Uterus (tissue), 4 donors: ENCODE measurements at regions of chr12 and their contacts with region 1.

Region 1: DNA sequence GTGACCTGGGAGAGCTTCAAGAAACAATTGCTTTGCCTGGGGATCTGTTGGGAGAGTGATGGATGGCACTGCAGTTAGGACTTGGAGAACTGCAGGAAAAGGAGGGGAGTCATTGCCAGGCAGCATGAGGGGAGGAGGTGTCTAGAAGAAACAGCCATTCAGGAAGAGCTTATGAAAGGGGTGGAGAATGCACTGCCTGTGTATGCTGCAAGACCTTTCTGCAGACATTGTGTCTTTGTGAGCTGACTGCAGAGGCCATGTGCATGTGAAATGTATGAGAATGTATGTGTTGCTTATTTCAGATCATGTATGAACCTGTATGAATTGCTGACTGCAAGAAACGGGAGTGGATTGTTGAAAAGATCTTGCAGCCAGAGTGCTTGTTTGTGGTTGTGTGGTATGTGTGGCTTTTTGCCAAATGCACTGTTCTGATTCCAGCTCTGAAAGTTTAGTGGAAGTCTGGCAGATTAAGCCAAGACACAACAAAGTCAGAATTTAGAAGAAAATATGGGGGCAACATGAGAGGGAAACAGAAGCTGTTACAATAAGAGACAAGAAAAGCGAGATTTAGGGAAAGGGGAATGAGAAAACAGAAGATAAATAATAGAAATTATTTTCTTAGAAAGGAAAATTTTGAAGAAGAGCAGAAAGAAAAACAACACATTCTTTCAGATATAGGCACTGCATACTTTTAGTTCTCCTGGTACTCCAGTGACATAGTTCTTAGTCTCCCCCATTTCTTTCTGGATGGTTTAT is 9.8 kb upstream of the RIMKLB start:
- DNase-seq: peak; percentile 56 to 87
- H3K4me3 ChIP-seq: no peak overlapping the region
- H3K27ac ChIP-seq: peak overlapping the region; percentile 79 to 82
- H3K4me1 ChIP-seq: no peaks in the 10 kb centered on the region
- H3K27me3 ChIP-seq: no peaks in the 10 kb centered on the region
- CTCF ChIP-seq: no peak
- POLR2A ChIP-seq: peak; percentile 20 to 39

Region 2: DNA sequence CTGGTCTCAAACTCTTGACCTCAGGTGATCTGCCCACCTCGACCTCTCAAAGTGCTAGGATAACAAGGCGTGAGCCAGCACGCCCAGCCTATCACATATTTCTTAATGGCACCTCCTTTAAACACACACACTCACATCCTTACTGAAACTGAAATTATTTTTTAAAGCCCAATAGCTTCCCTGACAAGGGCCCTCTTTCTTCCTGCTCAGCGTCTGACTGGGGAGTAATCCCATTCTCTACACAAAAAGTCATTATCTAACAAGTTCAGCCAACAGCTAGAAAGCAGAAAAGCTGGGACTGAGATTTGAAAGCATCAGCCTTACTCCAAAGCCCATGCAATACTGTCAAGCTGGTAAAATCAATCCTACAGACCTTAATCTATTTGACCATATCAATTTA is 65.4 kb before region 1 on chr12:
- intact Hi-C with region 1: no loop called
- DNase-seq: no peak
- H3K4me3 ChIP-seq: no peak overlapping the region
- H3K27ac ChIP-seq: no peak overlapping the region
- H3K4me1 ChIP-seq: no peaks in the 10 kb centered on the region
- H3K27me3 ChIP-seq: no peaks in the 10 kb centered on the region
- CTCF ChIP-seq: no peak
- POLR2A ChIP-seq: no peak

Region 3: DNA sequence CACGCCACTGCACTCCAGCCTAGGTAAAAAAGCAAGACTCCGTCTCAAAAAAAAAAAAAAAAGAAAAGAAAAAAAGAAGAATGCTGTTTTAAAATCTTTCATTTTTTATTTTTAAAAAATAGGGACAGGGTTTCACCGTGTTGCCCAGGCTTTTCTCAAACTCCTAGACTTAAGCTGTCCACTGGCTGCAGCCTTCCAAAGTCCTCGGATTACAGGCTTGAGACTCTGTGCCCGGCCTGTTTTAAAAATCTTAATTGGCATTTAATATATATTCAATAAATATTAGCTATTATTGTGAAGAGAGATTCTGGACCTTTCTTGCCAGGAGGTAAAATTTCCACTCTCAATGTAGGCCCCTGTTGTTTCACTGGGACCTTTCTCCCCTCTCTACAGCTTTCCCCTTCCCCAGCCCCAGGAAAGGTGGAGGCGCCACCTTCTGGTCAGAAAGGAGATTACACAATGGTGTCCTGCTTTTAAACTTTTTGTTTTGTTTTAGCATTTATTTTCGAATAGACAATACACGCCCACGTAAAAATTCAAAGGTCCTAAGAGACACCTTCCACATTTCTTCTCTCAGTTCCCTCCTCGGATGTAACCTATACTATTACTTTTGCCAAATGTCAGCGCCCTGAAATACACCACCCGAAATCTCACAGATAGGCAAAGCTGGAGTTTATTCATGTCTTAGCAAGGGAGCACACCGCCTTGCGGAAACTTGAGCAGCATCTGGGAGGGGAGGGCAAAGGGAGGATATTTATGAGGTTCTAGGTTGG is 202.5 kb after region 1 on chr12:
- intact Hi-C with region 1: loop called (anchors 10 kb)
- DNase-seq: peak; percentile 35 to 46
- H3K4me3 ChIP-seq: peak overlapping the region; percentile 29 to 43
- H3K27ac ChIP-seq: peak overlapping the region; percentile 37 to 55
- H3K4me1 ChIP-seq: no peaks in the 10 kb centered on the region
- H3K27me3 ChIP-seq: no peaks in the 10 kb centered on the region
- CTCF ChIP-seq: peak; percentile 70 to 91 (median 80)
- POLR2A ChIP-seq: no peak